Left colon (tissue), 2 donors: ENCODE measurements at regions of chr17 and their contacts with region 1.

Region 1: DNA sequence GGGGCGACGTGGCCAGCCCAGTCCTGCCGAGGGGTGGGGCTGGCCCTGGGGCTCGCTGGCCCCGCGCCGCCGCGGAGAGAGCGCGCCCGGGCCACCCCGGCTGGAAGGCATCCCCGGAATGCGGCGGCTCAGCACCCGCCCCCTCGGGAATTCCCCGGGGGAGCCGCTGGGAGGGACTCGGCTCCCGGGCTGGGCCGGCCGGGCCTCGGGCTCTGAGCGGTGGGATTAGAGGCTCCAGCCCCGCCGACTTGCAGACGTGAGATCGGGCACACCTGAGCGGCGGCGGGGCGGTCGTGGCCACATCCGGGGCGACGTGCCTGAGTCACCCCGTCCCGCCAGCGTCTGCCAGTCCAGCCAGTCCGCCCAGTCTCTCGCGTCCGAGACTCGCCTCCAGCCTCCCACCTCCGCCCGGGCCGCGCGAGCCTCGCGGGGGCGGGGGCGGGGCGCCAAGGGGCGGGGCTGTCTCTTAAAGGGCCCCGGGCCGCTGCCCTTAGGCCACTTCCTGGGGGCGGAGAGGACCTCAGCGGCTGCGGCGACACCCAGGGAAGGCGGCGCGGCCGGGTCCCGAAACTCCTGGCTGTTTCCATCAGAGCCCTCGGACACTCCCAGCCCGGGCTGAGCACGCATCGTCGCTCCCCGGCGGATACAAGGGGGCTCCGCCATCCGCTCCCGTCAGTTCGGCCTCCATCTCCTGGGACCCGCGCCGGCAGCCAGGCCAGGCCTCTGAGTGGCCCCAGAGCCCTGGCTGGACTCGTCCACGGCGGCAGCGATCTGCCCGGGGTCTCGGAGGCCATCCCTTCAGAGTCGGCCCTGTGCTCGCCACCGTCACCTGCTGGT is at the start of gene KCTD11:
- DNase-seq: peak; percentile 91 to 95
- ATAC-seq: peak; percentile 80
- total RNA-seq, gene KCTD11: 9.4 to 10.1 TPM

Region 2: DNA sequence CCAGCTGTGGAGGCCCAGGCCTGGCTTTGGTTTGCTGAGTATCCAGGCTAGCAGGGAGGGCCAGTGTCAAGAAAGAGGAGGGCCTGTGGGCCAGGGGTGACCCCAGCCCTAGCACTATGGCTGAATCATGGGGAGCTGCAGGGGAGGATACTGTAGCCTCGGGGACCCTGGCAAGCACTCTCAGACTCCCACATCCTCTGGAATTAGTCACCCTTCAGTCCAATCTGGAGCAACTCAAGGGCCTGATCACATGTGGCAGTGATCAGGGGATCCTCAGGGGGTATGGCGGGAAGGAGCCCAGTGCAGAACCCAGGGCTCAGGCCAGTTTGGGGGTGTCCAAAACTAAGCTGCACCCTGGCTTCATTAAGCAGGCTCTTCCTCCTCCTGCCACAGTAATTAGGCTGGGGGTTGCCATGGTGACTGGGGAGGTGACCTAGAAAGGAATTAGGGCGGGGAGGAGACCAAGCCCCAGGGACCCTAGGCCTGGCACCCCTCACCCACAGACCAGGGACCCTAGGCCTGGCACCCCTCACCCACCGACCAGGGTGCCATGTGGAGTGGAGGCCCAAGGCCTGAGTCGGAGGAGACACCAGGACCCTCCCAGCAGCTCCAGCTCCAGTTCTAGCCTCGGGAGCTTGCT is 61.6 kb after region 1 on chr17:
- intact Hi-C with region 1: no loop called
- DNase-seq: no peak
- ATAC-seq: no peak

Region 3: GRCh38 chr17:7435221-7435675 is 83.4 kb after region 1 on chr17 and contains the start of gene TMEM102:
- intact Hi-C with region 1: loop called in 1 of 2 experiments (anchors 10 kb)
- DNase-seq: peak; percentile 97 to 98
- ATAC-seq: peak; percentile 82
- total RNA-seq, gene TMEM102: 19.3 to 20.5 TPM

Region 4: GRCh38 chr17:7572588-7573323 is 220.9 kb after region 1 on chr17:
- intact Hi-C with region 1: loop called in 1 of 2 experiments (anchors 10 kb)
- DNase-seq: peak; percentile 99
- ATAC-seq: peak; percentile 84